HAP-1 (cell line): ENCODE measurements at regions of chr7 and their contacts with region 1.

Region 1: GRCh38 chr7:82044497-82045080 is 274.7 kb upstream of the HGF start:
- DNase-seq: peak; percentile 33 to 56
- H3K4me3 ChIP-seq: no peak overlapping the region
- H3K4me1 ChIP-seq: peaks cover 3% of the 10 kb centered on the region; the same call in 1 of the 2 replicates
- H3K27me3 ChIP-seq: no peaks in the 10 kb centered on the region

Region 2: DNA sequence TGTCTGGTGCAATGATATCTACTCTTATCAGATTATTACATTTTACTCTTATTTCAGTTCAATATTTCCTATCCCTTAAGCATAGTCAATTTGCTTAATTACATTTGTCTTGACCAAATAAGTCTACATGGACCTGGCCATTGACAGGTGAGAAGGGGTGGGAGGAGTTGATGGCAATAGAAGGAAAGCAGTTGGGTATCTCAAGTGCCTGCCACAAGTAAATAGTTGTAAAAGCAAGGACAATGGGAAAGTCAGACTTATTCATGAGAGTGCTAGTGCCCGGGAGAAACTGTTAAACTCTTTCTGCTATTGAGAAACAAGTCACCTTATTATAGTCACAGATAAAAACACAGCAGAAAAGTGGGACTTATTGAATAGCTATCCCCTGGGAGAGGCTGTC is 242.3 kb before region 1 on chr7:
- in situ Hi-C with region 1: no loop called
- DNase-seq: no peak
- H3K4me3 ChIP-seq: no peak overlapping the region
- H3K4me1 ChIP-seq: no peaks in the 10 kb centered on the region
- H3K27me3 ChIP-seq: no peaks in the 10 kb centered on the region

Region 3: DNA sequence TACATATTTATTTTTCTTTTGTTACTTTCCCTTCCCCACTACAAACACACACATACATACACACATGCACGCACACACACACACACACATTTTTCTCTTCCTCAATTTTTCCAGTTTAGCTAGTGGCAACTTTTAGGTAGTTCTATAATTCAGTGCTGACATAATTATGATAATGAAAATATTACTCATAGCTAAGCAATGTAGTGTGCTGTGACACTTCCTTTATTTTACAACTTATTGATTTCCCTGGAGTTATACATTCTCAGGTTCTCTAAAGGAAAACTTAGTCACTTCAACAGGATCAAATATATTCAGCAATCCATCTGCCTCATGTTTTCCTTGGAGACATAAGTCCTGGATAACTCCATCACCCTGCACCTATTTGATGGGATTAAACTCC is 247.3 kb after region 1 on chr7:
- in situ Hi-C with region 1: no loop called
- DNase-seq: no peak
- H3K4me3 ChIP-seq: no peak overlapping the region
- H3K4me1 ChIP-seq: peaks cover 21% of the 10 kb centered on the region
- H3K27me3 ChIP-seq: no peaks in the 10 kb centered on the region

Region 4: GRCh38 chr7:82319674-82320118 is 275.1 kb after region 1 on chr7:
- in situ Hi-C with region 1: no loop called
- DNase-seq: peak; percentile 60 to 78
- H3K4me3 ChIP-seq: no peak overlapping the region
- H3K4me1 ChIP-seq: peaks cover 31% of the 10 kb centered on the region
- H3K27me3 ChIP-seq: no peaks in the 10 kb centered on the region

Region 5: DNA sequence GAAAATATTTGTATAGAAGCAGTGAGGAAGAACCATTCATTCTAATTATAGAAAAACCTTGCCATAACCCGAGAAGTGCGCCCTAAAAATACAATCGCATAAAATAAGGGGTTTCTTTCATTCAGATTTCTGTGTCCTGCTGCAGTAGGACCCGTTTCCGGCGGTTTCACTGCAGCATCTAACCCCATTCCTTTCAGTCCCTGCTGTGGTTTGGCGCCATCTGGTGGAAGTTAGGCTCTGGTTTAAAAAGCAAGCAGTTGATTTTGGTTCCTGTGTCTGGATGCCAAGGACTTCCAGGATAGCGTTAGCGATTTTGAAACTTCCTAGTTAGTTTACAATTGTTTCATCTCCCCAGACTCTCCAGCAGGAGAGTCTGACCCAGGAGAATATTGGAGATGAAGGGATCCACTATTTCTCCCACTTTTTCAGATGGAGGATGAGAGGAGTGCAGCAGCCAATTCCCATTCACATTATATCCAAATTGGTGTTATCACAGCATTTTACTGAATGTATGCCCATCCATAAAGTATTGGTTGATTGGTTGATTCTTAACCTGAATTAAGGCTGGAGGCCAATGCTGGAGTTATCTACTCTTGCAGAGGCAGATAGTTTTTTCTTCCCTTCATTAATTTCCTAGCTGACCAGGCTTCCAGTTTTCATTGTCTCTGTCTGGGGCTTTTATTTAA is 527.7 kb after region 1 on chr7:
- in situ Hi-C with region 1: loop called (anchors 10 kb)
- DNase-seq: peak; percentile 80 to 94
- H3K4me3 ChIP-seq: no peak overlapping the region
- H3K4me1 ChIP-seq: no peaks in the 10 kb centered on the region
- H3K27me3 ChIP-seq: 0 out of 2 replicates have a peak, but pooled peaks cover 3% of the 10 kb centered on the region

Region 6: DNA sequence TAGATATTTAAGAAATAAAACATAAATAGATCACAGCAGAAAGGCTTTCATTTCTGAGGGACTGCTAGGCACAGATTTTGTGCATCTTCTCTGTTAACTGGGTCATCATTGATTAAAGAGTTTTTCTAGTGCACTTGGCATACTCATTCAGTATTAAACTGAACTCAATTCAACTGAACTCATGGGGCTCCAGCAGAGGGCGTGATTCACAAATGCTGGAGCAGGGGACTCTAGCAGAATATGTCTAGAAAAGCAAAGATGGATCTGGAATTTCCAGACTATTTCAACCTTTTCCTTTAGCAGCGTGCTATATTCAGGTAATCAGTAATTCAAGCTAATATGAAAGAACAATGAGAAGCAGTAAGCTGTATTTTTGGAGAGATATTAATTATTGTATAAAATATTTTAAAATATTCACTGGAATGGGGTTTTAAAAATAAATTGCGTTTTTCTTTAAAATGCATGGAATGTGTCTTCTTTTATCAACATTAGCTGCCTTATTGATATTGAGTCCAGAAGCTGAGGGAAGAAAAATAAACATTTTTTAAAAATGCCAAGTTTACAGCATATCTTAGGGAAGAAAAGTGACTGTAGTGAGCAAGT is 695.8 kb after region 1 on chr7:
- in situ Hi-C with region 1: loop called (anchors 25 kb)
- DNase-seq: peak; percentile 41 to 79
- H3K4me3 ChIP-seq: no peak overlapping the region
- H3K4me1 ChIP-seq: no peaks in the 10 kb centered on the region
- H3K27me3 ChIP-seq: no peaks in the 10 kb centered on the region